MCF 10A (cell line): ENCODE measurements at regions of chr4 and their contacts with region 1.

Region 1: DNA sequence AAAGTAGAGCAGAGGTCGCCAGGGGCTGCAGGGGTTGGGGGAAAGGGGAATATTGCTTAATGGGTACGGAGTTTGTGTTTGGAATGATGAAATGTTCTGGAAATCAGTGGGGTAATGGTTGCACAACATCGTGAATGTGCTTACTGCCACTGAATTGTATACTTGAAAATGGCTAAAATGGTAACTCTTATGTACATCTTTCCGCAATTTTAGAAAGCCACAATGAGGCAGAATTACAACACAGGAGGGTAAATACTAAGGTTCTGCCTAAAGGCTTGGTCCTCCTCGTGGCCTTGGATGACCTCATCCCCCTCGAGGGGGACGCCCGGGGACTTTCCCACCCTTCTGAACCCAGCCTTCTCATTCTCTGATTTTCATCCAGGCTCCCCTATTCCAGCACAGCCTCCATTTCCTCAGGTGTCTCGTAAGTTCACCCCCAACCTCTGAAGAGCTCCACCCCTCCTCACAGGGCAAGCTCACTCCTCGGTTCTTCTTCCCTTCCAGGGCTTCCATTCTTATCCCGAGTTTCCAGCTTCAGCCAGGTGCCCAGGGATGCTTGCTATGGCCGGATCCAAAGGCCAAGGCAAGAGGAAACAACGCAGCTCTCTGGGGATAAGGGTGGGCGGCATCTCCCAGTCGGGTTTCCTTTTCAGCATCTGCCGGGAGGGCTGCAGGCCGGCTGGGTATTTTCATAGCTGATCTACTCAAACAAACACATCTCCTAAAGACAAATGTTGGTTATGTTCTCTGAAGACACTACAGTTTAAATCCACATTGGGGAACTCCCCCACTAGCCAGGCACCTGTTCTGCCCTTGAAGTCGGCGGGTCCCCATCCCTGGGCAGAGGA is 71.3 kb upstream of the ACSL1 start:
- DNase-seq: peak; percentile 86
- H3K4me3 Mint-ChIP-seq: no peak overlapping the region
- H3K27ac Mint-ChIP-seq: peak overlapping the region; percentile 82
- H3K4me1 Mint-ChIP-seq: peaks cover 45% of the 10 kb centered on the region
- H3K27me3 Mint-ChIP-seq: no peaks in the 10 kb centered on the region
- CTCF ChIP-seq: no peak

Region 2: GRCh38 chr4:184825896-184826690 is 71.0 kb before region 1 on chr4 and contains the start of gene ACSL1:
- CTCF ChIA-PET with region 1: no interaction called
- POLR2A ChIA-PET with region 1: interaction called, 10 read pairs
- intact Hi-C with region 1: no loop called
- DNase-seq: peak; percentile 65
- H3K4me3 Mint-ChIP-seq: peak within 1 kb of the TSS; percentile 87
- H3K27ac Mint-ChIP-seq: peak within 1 kb of the TSS; percentile 50
- H3K4me1 Mint-ChIP-seq: peaks cover 23% of the 10 kb centered on the region
- H3K27me3 Mint-ChIP-seq: no peaks in the 10 kb centered on the region
- CTCF ChIP-seq: no peak
- total RNA-seq, gene ACSL1: 99.5 and 105 TPM in 2 replicates

Region 3: GRCh38 chr4:184845367-184846021 is 51.6 kb before region 1 on chr4:
- CTCF ChIA-PET with region 1: interaction called, 4 read pairs
- POLR2A ChIA-PET with region 1: interaction called, 14 read pairs
- intact Hi-C with region 1: no loop called
- DNase-seq: peak; percentile 84
- H3K4me3 Mint-ChIP-seq: no peak overlapping the region
- H3K27ac Mint-ChIP-seq: peak overlapping the region; percentile 69
- H3K4me1 Mint-ChIP-seq: peaks cover 13% of the 10 kb centered on the region
- H3K27me3 Mint-ChIP-seq: no peaks in the 10 kb centered on the region
- CTCF ChIP-seq: no peak

Region 4: DNA sequence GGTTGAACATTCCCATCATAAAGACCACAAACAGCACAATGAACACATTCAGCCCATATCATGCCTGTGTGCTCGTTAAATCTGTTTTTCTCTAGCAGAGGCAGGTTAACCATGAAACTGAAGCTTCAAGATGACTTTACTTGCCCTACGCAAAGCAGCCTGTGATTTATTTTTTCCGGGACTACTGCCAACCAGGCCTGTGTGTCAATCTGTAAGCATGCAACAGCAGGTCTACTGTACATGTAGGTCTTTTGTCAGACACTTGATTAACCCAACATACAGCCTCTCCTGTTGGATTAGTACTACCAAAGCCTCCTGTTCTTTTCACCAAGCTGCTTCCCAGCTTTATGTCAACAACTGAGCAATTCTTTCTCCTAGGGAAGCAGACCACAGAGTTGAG is 14.2 kb after region 1 on chr4:
- CTCF ChIA-PET with region 1: interaction called, 3 read pairs
- POLR2A ChIA-PET with region 1: interaction called, 36 read pairs
- intact Hi-C with region 1: no loop called
- DNase-seq: peak; percentile 93
- H3K4me3 Mint-ChIP-seq: no peak overlapping the region
- H3K27ac Mint-ChIP-seq: no peak overlapping the region
- H3K4me1 Mint-ChIP-seq: peaks cover 28% of the 10 kb centered on the region
- H3K27me3 Mint-ChIP-seq: no peaks in the 10 kb centered on the region
- CTCF ChIP-seq: no peak

Region 5: GRCh38 chr4:184968784-184969201 is 71.7 kb after region 1 on chr4:
- CTCF ChIA-PET with region 1: no interaction called
- POLR2A ChIA-PET with region 1: no interaction called
- intact Hi-C with region 1: no loop called
- DNase-seq: peak; percentile 77
- H3K4me3 Mint-ChIP-seq: no peak overlapping the region
- H3K27ac Mint-ChIP-seq: no peak overlapping the region
- H3K4me1 Mint-ChIP-seq: peaks cover 6% of the 10 kb centered on the region
- H3K27me3 Mint-ChIP-seq: no peaks in the 10 kb centered on the region
- CTCF ChIP-seq: no peak